ENCODE measurements at regions of chr17 and their contacts with region 1.

Region 1: DNA sequence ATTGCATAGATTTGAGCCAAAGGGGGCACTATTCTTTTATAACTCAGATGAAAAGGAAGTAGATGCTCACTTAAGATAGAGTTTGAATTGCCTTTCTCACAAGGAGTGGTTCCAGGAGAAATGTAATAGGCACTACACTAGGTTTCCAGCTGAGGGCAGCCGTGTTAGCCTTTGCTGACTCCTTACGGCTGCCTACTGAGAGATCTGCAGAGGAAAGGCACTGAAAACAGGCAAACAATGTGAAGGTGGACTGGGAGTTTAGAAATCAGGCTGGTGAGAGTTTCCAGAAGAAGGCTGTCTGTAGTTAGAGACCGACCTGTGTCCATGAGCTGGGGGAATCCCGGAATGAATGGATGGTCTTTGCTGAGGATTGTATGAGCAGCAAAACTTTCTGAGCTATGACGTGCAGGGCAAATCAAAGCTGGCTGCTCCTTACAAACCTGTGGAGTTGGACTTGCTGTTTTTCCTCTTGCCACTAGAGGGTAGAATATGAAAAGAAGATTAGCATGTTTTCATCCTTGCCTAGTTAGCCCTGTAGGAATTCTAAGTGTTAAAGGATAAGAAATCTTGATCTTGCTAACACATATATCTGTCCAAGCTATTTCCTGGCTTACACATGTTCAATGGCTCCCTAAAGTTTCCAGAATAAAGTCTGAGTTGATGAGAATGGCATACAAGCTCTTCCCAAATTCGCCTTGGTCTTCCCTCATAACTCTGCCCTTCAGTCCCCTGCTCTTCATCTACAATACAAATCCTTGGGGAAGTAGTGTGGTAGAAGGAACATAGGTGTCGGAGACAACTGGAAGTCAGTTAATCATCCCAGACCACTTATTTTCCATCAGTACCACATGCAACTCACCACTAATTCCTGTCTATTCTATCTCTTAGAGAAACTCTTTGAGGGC is 20.1 kb upstream of the TAOK1 start:
- DNase-seq: peak; percentile 57
- ATAC-seq: peak; percentile 95
- H3K4me3 Mint-ChIP-seq: no peak overlapping the region
- H3K27ac Mint-ChIP-seq: no peak overlapping the region
- H3K4me1 Mint-ChIP-seq: no peaks in the 10 kb centered on the region
- H3K27me3 Mint-ChIP-seq: no peaks in the 10 kb centered on the region
- CTCF ChIP-seq: peak; percentile 82

Region 2: DNA sequence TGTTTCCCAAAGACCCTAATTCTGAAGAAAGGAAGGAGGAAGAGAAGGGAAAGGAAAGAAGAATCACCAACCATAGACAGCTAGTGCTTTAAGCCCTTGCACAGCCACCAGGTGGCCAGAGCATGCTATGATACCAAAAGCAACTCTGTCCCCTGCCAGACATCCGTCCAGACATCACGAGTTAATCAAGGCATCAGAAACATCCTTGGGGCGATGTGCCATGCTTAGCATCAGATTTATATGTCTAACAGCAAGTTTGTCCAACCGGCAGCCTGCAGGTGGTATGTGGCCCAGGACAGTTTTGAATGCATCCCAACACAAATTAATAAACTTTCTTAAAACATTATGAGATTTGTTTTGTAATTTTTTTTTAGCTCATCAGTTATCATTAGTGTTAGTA is 126.3 kb before region 1 on chr17:
- CTCF ChIA-PET with region 1: no interaction called
- POLR2A ChIA-PET with region 1: no interaction called
- intact Hi-C with region 1: no loop called
- DNase-seq: peak; percentile 20
- ATAC-seq: no peak
- H3K4me3 Mint-ChIP-seq: no peak overlapping the region
- H3K27ac Mint-ChIP-seq: no peak overlapping the region
- H3K4me1 Mint-ChIP-seq: peaks cover 7% of the 10 kb centered on the region
- H3K27me3 Mint-ChIP-seq: no peaks in the 10 kb centered on the region
- CTCF ChIP-seq: peak; percentile 3

Region 3: GRCh38 chr17:29303386-29303785 is 66.7 kb before region 1 on chr17:
- CTCF ChIA-PET with region 1: no interaction called
- POLR2A ChIA-PET with region 1: no interaction called
- intact Hi-C with region 1: no loop called
- DNase-seq: no peak
- ATAC-seq: no peak
- H3K4me3 Mint-ChIP-seq: no peak overlapping the region
- H3K27ac Mint-ChIP-seq: no peak overlapping the region
- H3K4me1 Mint-ChIP-seq: peaks cover 10% of the 10 kb centered on the region
- H3K27me3 Mint-ChIP-seq: no peaks in the 10 kb centered on the region
- CTCF ChIP-seq: no peak

Region 4: DNA sequence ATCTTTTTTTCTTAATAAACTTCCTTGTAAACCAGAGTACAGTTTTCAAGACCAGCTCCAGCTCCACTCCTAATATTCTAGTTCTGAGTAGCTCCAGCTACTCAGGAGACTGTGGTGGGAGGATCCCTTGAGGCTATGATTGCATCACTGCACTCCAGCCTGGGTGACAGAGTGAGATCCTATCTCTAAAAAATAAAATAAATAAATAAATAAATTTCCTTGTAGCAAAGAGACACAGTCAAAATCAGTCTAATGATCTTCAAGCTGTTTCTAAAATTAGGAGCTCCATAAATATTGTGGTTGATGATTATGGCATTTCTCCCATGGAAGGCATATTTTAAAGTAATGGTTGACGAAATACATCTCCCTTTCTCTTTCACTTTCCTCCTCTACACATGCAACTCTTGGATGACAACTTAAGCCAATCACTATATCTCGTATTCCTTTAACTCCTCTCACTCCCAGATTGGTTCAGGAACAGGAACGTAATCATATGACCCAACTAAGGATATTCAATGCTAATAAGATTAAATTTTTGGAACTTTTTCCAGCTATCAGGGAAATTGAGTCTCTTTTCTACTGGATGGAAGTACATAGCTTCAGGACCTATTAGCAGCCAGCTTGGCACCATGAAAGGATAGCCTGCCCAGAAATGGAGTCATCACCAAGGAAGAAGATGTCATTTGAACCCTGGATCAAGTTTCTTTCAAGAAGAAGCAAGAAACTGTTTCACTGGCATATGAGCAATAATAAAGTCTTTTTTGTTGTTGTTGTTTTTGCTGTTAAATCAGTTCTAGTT is 22.1 kb before region 1 on chr17:
- CTCF ChIA-PET with region 1: interaction called, 15 read pairs
- POLR2A ChIA-PET with region 1: no interaction called
- intact Hi-C with region 1: no loop called
- DNase-seq: no peak
- ATAC-seq: no peak
- H3K4me3 Mint-ChIP-seq: no peak overlapping the region
- H3K27ac Mint-ChIP-seq: no peak overlapping the region
- H3K4me1 Mint-ChIP-seq: no peaks in the 10 kb centered on the region
- H3K27me3 Mint-ChIP-seq: no peaks in the 10 kb centered on the region
- CTCF ChIP-seq: no peak

Region 5: GRCh38 chr17:29393451-29393850 is 23.4 kb after region 1 on chr17:
- CTCF ChIA-PET with region 1: interaction called, 14 read pairs
- POLR2A ChIA-PET with region 1: interaction called, 4 read pairs
- intact Hi-C with region 1: no loop called
- DNase-seq: no peak
- ATAC-seq: no peak
- H3K4me3 Mint-ChIP-seq: no peak overlapping the region
- H3K27ac Mint-ChIP-seq: peak overlapping the region; percentile 57
- H3K4me1 Mint-ChIP-seq: peaks cover 33% of the 10 kb centered on the region
- H3K27me3 Mint-ChIP-seq: no peaks in the 10 kb centered on the region
- CTCF ChIP-seq: no peak

Region 6: GRCh38 chr17:29495011-29495410 is 124.9 kb after region 1 on chr17:
- CTCF ChIA-PET with region 1: interaction called, 21 read pairs
- POLR2A ChIA-PET with region 1: no interaction called
- intact Hi-C with region 1: no loop called
- DNase-seq: no peak
- ATAC-seq: no peak
- H3K4me3 Mint-ChIP-seq: no peak overlapping the region
- H3K27ac Mint-ChIP-seq: no peak overlapping the region
- H3K4me1 Mint-ChIP-seq: peaks cover 2% of the 10 kb centered on the region
- H3K27me3 Mint-ChIP-seq: no peaks in the 10 kb centered on the region
- CTCF ChIP-seq: no peak

Region 7: DNA sequence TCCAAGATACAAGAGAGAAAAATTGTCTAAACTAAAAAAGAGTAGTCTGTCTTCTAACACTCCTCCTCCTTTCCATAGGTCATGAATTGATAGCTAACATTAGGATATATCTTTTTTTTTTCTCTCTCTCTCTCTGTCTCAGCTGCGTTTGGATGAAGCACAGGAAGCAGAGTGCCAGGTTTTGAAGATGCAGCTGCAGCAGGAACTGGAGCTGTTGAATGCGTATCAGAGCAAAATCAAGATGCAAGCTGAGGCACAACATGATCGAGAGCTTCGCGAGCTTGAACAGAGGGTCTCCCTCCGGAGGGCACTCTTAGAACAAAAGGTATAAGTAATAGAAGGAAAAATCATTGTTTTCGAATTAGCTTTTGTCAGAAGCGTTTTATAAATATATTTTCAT is 163.9 kb after region 1 on chr17:
- CTCF ChIA-PET with region 1: interaction called, 67 read pairs
- POLR2A ChIA-PET with region 1: no interaction called
- intact Hi-C with region 1: loop called (anchors 1 kb)
- DNase-seq: no peak
- ATAC-seq: no peak
- H3K4me3 Mint-ChIP-seq: no peak overlapping the region
- H3K27ac Mint-ChIP-seq: peak overlapping the region; percentile 14
- H3K4me1 Mint-ChIP-seq: no peaks in the 10 kb centered on the region
- H3K27me3 Mint-ChIP-seq: no peaks in the 10 kb centered on the region
- CTCF ChIP-seq: no peak

Region 8: GRCh38 chr17:29568331-29569244 is 198.5 kb after region 1 on chr17 and contains the start of gene TP53I13:
- CTCF ChIA-PET with region 1: interaction called, 28 read pairs
- POLR2A ChIA-PET with region 1: no interaction called
- intact Hi-C with region 1: no loop called
- DNase-seq: peak; percentile 92
- ATAC-seq: peak; percentile 62
- H3K4me3 Mint-ChIP-seq: peak within 1 kb of the TSS; percentile 86
- H3K27ac Mint-ChIP-seq: peak within 1 kb of the TSS; percentile 91
- H3K4me1 Mint-ChIP-seq: peaks cover 26% of the 10 kb centered on the region
- H3K27me3 Mint-ChIP-seq: no peaks in the 10 kb centered on the region
- CTCF ChIP-seq: no peak
- total RNA-seq, gene TP53I13: 46.7 to 50.2 TPM